ENCODE measurements at regions of chr18 and their contacts with region 1.

Region 1: DNA sequence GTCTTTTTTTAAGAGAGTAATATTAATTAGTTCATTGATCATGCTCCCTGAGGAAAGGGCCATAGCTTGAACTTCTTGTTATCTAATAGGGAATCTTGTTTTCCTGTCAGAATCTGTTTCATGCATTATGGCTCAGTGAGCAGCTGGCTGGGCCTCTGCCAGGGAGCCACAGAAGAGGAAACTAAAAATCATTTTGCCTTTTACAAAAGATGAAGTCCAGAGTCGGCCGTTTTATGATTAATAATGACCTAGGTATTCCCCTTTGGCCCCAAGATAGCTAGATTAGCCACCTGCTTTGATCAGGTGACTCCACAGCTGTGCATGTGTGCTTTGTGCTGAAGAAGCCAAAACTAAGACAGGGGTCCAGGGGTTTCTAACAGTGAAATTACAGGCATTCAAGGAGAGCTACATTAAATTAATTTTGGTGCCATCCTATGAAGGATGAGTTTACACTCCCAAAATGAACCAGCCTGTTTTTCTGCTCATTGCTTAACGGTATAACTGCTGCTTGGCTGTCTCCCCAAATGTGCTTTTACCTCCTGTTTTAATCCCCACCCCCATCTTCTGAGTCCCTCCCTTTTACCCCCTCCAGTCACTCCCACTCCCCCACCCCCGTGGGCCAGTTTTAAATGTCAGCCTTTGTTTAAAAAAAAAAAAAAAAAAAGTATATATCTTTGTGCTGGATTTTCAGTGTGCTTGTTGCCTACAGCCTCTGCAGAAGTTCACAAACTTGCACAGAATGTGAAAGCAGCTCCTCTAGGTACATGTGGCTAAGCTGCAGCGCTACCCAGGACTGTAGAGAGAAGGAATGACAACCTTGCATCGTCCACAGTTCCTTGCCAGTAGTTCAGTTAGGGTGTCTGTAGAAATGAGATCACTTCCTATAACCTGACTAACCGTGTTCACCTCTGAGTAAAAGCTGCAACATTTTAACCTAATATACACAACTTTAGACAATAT is 93.1 kb downstream of the CABLES1 start:
- DNase-seq: no peak
- H3K4me3 ChIP-seq: no peak overlapping the region
- H3K27ac ChIP-seq: no peak overlapping the region
- H3K27me3 ChIP-seq: no peaks in the 10 kb centered on the region
- CTCF ChIP-seq: no peak

Region 2: GRCh38 chr18:23115683-23116096 is 112.7 kb before region 1 on chr18:
- CTCF ChIA-PET with region 1: no interaction called
- POLR2A ChIA-PET with region 1: interaction called, 12 read pairs
- DNase-seq: peak; percentile 98
- H3K4me3 ChIP-seq: no peak overlapping the region
- H3K27ac ChIP-seq: peak overlapping the region; percentile 92
- H3K27me3 ChIP-seq: no peaks in the 10 kb centered on the region
- CTCF ChIP-seq: no peak

Region 3: DNA sequence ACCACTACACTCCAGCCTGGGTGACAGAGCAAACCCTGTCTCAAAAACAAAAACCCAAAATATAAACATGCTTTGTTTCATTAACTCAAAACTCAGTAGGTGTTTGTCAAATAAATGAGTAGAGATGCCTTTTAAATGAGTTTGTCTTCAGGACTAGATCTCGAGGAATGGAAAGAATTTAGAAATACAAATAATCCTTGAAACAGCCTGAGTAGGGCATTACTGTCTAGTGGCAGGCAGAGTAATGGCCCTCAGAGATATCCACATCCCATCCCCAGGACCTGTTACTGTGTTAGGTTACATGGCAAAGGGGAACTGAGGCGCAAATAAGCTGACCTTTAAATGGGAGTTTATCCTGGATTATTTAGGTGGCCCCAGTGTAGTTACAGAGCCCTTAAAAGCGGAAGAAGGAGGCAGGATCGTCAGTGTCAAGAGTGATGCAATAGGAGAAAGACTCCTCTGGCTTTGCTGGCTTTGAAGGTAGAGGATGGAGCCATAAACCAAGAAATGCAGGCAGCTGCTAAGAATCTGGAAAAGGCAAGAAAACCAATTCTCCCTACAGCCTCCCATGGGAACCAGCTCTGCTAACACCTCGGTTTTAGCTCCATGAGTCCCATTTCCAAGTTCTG is 30.1 kb before region 1 on chr18:
- CTCF ChIA-PET with region 1: no interaction called
- POLR2A ChIA-PET with region 1: interaction called, 11 read pairs
- DNase-seq: no peak
- H3K4me3 ChIP-seq: no peak overlapping the region
- H3K27ac ChIP-seq: no peak overlapping the region
- H3K27me3 ChIP-seq: no peaks in the 10 kb centered on the region
- CTCF ChIP-seq: no peak

Region 4: DNA sequence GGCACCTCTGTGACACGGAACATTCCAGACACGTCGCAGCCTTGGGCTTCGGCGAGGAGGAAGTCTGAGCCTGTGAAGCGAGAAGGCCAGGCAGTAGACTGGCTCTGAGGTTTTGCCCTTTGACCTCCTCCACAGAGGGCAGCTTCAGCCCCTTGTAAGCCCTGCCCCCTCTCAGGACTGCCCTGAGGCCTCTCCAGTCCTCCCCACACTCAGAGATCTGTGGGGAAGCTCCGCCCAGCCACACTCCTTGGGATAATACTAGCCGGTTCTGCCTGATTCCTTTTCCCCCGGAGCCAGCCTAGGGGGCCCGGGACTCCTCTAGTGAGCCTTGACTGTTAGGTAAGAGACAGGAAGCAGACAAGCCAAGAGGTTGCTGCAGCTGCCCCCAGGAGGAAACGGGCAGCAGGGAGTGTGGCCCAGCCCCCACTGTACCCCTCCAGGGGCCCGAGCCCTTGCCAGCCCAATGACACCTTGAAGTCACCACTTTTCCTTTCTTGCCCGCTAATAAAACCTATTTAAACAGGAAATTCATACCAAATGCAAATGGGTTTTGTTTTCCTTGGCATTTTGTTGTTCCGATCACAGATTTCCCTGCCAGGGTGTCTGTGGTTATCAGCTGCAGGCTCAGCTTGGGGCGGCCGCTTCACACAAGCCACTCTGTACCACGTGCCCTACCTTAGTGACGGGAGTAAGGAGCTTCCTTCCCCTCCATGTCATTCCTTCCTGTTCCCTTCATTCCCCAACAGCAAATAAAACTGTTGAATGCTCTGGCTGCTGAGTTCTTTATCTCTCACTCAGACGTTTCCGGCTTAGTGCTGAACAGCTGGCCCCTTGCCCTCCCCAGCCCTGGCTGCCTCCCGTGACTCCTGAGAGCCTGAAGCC is 31.6 kb after region 1 on chr18:
- CTCF ChIA-PET with region 1: no interaction called
- POLR2A ChIA-PET with region 1: interaction called, 20 read pairs
- DNase-seq: peak; percentile 37
- H3K4me3 ChIP-seq: 0 out of 2 replicates have a peak overlapping the region, but pooled peaks have one; percentile 13
- H3K27ac ChIP-seq: peak overlapping the region; percentile 84
- H3K27me3 ChIP-seq: no peaks in the 10 kb centered on the region
- CTCF ChIP-seq: no peak

Measured in AG04450 (cell line).